Caco-2 (cell line): ENCODE measurements at regions of chr10 and their contacts with region 1.

Region 1: DNA sequence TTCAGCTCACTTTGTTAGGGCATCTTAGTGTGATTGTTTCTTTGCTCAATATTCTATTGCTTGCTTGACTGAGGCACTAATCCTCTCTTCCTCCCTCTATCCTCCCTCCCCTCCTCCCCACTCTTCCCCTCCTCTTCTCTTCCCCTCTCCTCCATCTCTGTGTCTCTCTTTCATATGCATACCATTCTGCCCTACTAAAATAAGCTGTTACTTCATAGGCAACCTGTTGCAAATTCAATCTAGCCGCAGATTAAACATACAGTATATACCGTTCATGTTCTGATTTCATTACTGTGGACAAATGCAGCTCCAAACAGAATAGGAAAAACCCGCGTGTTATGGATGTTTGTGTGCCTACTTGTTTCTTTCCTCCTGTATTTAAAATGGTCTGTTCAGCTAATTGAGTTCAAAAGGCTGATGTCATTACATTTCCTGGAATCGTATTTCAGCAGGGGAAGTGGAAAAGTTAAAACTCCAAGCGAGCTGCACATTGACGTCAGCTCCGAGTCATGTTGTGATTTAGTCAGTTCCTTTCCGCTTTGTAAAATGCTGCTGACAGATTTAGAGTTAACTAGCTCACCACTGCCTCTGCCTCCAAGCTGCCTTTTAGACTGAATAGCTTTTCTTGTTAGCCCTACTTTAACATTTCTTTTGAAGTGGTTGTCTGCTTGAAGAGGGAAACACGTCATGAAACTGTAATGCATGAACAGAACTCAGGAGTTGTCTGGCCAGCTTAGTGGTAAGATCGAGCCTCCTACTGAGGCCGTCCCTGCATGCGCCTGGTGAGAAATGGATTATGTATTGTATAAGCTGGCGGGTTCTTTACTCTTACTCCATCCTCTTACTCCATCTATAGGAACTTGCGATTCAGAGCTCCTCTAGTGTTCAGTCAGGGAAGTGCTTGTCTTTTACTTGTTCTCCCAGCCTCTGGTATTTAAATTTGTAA is 69.0 kb downstream of the CREM start:
- DNase-seq: peak; percentile 84 to 85
- H3K4me3 ChIP-seq: peak overlapping the region; percentile 37
- H3K4me3 Mint-ChIP-seq: peak overlapping the region; percentile 70
- H3K27ac Mint-ChIP-seq: peak overlapping the region; percentile 77
- H3K4me1 ChIP-seq: peaks cover 4% of the 10 kb centered on the region; the same call in 1 of the 2 replicates
- H3K4me1 Mint-ChIP-seq: peaks cover 7% of the 10 kb centered on the region
- H3K27me3 ChIP-seq: no peaks in the 10 kb centered on the region
- H3K27me3 Mint-ChIP-seq: no peaks in the 10 kb centered on the region
- CTCF ChIP-seq: peak; percentile 92 to 96

Region 2: GRCh38 chr10:34756584-34756983 is 439.1 kb before region 1 on chr10:
- CTCF ChIA-PET with region 1: no interaction called
- POLR2A ChIA-PET with region 1: interaction called, 10 read pairs
- intact Hi-C with region 1: no loop called
- DNase-seq: no peak
- H3K4me3 ChIP-seq: no peak overlapping the region
- H3K4me3 Mint-ChIP-seq: no peak overlapping the region
- H3K27ac Mint-ChIP-seq: no peak overlapping the region
- H3K4me1 ChIP-seq: peaks cover 15% of the 10 kb centered on the region
- H3K4me1 Mint-ChIP-seq: peaks cover 31% of the 10 kb centered on the region
- H3K27me3 ChIP-seq: no peaks in the 10 kb centered on the region
- H3K27me3 Mint-ChIP-seq: no peaks in the 10 kb centered on the region
- CTCF ChIP-seq: no peak

Region 3: DNA sequence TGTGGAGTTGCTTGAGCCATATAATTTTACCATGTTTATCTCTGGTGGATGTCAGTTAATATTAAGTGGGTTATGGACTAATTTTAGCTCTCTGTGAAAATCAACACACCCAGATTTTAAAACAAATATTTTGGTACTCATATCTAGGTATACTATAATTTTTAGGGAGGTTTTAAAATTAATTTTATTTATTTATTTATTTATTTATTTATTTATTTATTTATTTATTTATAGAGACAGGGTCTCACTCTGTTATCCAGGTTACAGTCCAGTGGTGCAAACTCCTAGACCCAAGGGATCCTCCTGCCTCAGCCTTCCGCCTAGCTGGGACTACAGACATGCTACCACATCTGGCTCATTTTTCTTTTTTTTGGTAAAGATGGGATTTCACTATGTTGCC is 76.3 kb before region 1 on chr10:
- CTCF ChIA-PET with region 1: interaction called, 17 read pairs
- POLR2A ChIA-PET with region 1: interaction called, 3 read pairs
- intact Hi-C with region 1: no loop called
- DNase-seq: no peak
- H3K4me3 ChIP-seq: no peak overlapping the region
- H3K4me3 Mint-ChIP-seq: no peak overlapping the region
- H3K27ac Mint-ChIP-seq: no peak overlapping the region
- H3K4me1 ChIP-seq: no peaks in the 10 kb centered on the region
- H3K4me1 Mint-ChIP-seq: no peaks in the 10 kb centered on the region
- H3K27me3 ChIP-seq: no peaks in the 10 kb centered on the region
- H3K27me3 Mint-ChIP-seq: peaks cover 4% of the 10 kb centered on the region
- CTCF ChIP-seq: no peak

Region 4: GRCh38 chr10:35126530-35127296 is 68.9 kb before region 1 on chr10 and contains the start of gene CREM:
- CTCF ChIA-PET with region 1: interaction called, 82 read pairs
- POLR2A ChIA-PET with region 1: interaction called, 45 read pairs
- intact Hi-C with region 1: loop called (anchors 1 kb)
- DNase-seq: peak; percentile 100
- H3K4me3 ChIP-seq: peak within 1 kb of the TSS; percentile 87
- H3K4me3 Mint-ChIP-seq: peak within 1 kb of the TSS; percentile 93
- H3K27ac Mint-ChIP-seq: peak within 1 kb of the TSS; percentile 97
- H3K4me1 ChIP-seq: peaks cover 9% of the 10 kb centered on the region
- H3K4me1 Mint-ChIP-seq: no peaks in the 10 kb centered on the region
- H3K27me3 ChIP-seq: no peaks in the 10 kb centered on the region
- H3K27me3 Mint-ChIP-seq: no peaks in the 10 kb centered on the region
- CTCF ChIP-seq: peak; percentile 96 to 99
- total RNA-seq, gene CREM: 24.7 and 26.1 TPM in 2 replicates

Region 5: GRCh38 chr10:35150308-35150707 is 45.3 kb before region 1 on chr10:
- CTCF ChIA-PET with region 1: interaction called, 12 read pairs
- POLR2A ChIA-PET with region 1: no interaction called
- intact Hi-C with region 1: no loop called
- DNase-seq: no peak
- H3K4me3 ChIP-seq: no peak overlapping the region
- H3K4me3 Mint-ChIP-seq: no peak overlapping the region
- H3K27ac Mint-ChIP-seq: no peak overlapping the region
- H3K4me1 ChIP-seq: peaks cover 16% of the 10 kb centered on the region
- H3K4me1 Mint-ChIP-seq: peaks cover 10% of the 10 kb centered on the region
- H3K27me3 ChIP-seq: no peaks in the 10 kb centered on the region
- H3K27me3 Mint-ChIP-seq: no peaks in the 10 kb centered on the region
- CTCF ChIP-seq: no peak

Region 6: DNA sequence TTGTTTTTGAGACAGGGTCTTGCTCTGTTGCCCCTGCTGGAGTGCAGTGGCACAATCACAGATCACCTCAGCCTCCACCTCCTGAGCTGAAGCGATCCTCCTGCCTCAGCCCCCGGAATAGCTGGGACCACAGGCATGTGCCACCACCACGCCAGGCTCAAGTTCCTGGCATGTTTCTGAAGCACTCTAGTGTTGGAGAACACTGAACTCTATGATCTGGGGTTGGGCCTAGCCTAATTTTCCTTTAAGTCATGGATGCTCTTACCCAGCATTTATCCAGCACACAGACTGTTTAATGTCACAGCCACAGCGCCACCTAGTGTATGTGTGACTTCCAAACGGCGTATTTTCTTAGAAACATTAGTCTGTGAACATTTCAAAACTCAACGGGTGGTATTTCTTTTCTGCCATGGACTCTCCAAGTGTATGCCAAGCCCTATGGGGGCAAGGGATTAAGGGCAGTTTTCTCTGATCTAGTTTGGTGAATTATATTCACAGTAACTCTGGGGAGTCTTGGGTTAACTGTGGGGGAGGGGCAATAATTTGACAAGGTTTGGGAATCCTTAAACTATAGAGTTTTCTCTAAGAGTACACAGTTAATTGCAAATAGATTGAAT is 22.8 kb after region 1 on chr10:
- CTCF ChIA-PET with region 1: interaction called, 14 read pairs
- POLR2A ChIA-PET with region 1: no interaction called
- intact Hi-C with region 1: loop called (anchors 1 kb)
- DNase-seq: peak; percentile 81 to 82
- H3K4me3 ChIP-seq: no peak overlapping the region
- H3K4me3 Mint-ChIP-seq: no peak overlapping the region
- H3K27ac Mint-ChIP-seq: no peak overlapping the region
- H3K4me1 ChIP-seq: peaks cover 5% of the 10 kb centered on the region; the same call in 1 of the 2 replicates
- H3K4me1 Mint-ChIP-seq: peaks cover 7% of the 10 kb centered on the region
- H3K27me3 ChIP-seq: no peaks in the 10 kb centered on the region; the same call in 1 of the 2 replicates
- H3K27me3 Mint-ChIP-seq: peaks cover 3% of the 10 kb centered on the region
- CTCF ChIP-seq: peak; percentile 84 to 91

Region 7: GRCh38 chr10:35289198-35289597 is 93.6 kb after region 1 on chr10:
- CTCF ChIA-PET with region 1: no interaction called
- POLR2A ChIA-PET with region 1: no interaction called
- intact Hi-C with region 1: no loop called
- DNase-seq: no peak
- H3K4me3 ChIP-seq: no peak overlapping the region
- H3K4me3 Mint-ChIP-seq: no peak overlapping the region
- H3K27ac Mint-ChIP-seq: no peak overlapping the region
- H3K4me1 ChIP-seq: no peaks in the 10 kb centered on the region
- H3K4me1 Mint-ChIP-seq: no peaks in the 10 kb centered on the region
- H3K27me3 ChIP-seq: no peaks in the 10 kb centered on the region
- H3K27me3 Mint-ChIP-seq: no peaks in the 10 kb centered on the region
- CTCF ChIP-seq: no peak